ENCODE measurements at regions of chr6 and their contacts with region 1.

Region 1: DNA sequence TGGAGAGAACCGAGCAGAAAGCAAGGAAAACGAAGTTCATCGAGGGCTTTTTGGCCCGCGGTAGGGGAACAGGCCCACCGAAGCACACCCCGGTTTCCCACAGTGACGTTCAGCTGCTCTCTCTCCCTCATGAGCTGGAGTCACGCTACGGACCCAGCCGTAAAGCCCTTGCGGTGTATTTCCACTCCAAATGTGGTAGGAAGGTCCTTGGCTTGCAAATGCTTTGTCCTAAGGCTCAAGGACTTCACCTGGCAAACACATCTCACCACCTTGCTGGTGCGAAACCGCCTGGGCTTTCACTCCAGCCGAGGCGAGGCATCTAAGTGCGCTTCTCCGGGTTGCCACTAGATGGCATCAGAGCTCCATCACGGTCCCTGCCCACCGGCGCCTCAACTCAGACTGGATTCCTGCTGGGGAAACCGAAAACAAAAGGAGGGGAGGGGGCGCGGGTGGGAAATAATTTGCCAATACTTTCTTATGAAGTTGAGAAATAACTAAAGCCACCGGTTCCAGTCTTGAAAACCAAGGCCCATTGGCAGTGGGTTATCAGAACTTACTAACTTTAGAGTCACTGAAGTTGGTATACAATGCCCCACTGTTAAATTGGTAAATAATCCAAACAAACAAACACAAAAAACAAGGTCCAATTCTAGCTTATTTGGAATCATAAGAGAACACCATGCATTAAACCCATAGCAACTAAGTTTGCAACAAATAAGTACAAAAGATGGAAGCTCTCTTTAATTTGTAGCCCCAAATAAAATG is 13.4 kb upstream of the FOXC1 start:
- DNase-seq: no peak
- ATAC-seq: peak; percentile 96
- H3K4me3 ChIP-seq: no peak overlapping the region
- H3K27ac ChIP-seq: no peak overlapping the region
- H3K4me1 ChIP-seq: no peaks in the 10 kb centered on the region
- H3K27me3 ChIP-seq: no peaks in the 10 kb centered on the region; a peak in 2 of 4 replicates
- CTCF ChIP-seq: peak; percentile 92 to 93 (median 93)
- EP300 ChIP-seq: no peak
- POLR2A ChIP-seq: no peak
- RAD21 ChIP-seq: peak; percentile 90

Region 2: GRCh38 chr6:1609648-1610496 is 13.6 kb after region 1 on chr6 and contains the start of gene FOXC1:
- CTCF ChIA-PET with region 1: interaction called, 19 read pairs
- POLR2A ChIA-PET with region 1: no interaction called
- RAD21 ChIA-PET with region 1: interaction called, 5 read pairs
- SMC1A ChIA-PET with region 1: interaction called, 10 read pairs
- in situ Hi-C with region 1: no loop called
- intact Hi-C with region 1: no loop called
- DNase-seq: no peak
- ATAC-seq: peak; percentile 83
- H3K4me3 ChIP-seq: peak within 1 kb of the TSS; percentile 72
- H3K27ac ChIP-seq: no peak within 1 kb of the TSS
- H3K4me1 ChIP-seq: peaks cover 10% of the 10 kb centered on the region
- H3K27me3 ChIP-seq: peaks cover 27 to 36% of the 10 kb centered on the region in 2 experiments
- CTCF ChIP-seq: no peak
- EP300 ChIP-seq: no peak
- POLR2A ChIP-seq: peak; percentile 28; the same call in 1 of the 2 replicates
- RAD21 ChIP-seq: no peak
- polyA plus RNA-seq, gene FOXC1: 0.13 to 0.26 TPM

Region 3: GRCh38 chr6:2196079-2196679 is 599.9 kb after region 1 on chr6:
- CTCF ChIA-PET with region 1: interaction called, 18 read pairs
- POLR2A ChIA-PET with region 1: no interaction called
- RAD21 ChIA-PET with region 1: interaction called, 5 read pairs
- SMC1A ChIA-PET with region 1: interaction called, 6 read pairs
- in situ Hi-C with region 1: no loop called
- intact Hi-C with region 1: loop called (anchors 2 kb)
- DNase-seq: peak; percentile 13
- ATAC-seq: peak; percentile 87
- H3K4me3 ChIP-seq: no peak overlapping the region
- H3K27ac ChIP-seq: no peak overlapping the region
- H3K4me1 ChIP-seq: no peaks in the 10 kb centered on the region
- H3K27me3 ChIP-seq: no peaks in the 10 kb centered on the region
- CTCF ChIP-seq: peak; percentile 67 to 79 (median 77)
- EP300 ChIP-seq: no peak
- POLR2A ChIP-seq: no peak
- RAD21 ChIP-seq: peak; percentile 88

Region 4: GRCh38 chr6:2353412-2354137 is 757.3 kb after region 1 on chr6:
- CTCF ChIA-PET with region 1: interaction called, 28 read pairs
- POLR2A ChIA-PET with region 1: no interaction called
- RAD21 ChIA-PET with region 1: interaction called, 8 read pairs
- SMC1A ChIA-PET with region 1: interaction called, 18 read pairs
- in situ Hi-C with region 1: loop called (anchors 5 kb)
- intact Hi-C with region 1: loop called (anchors 2 kb)
- DNase-seq: peak; percentile 8
- ATAC-seq: peak; percentile 73
- H3K4me3 ChIP-seq: no peak overlapping the region
- H3K27ac ChIP-seq: no peak overlapping the region
- H3K4me1 ChIP-seq: no peaks in the 10 kb centered on the region
- H3K27me3 ChIP-seq: no peaks in the 10 kb centered on the region
- CTCF ChIP-seq: peak; percentile 70 to 83 (median 78); a peak in 5 of 6 replicates
- EP300 ChIP-seq: no peak
- POLR2A ChIP-seq: no peak
- RAD21 ChIP-seq: peak; percentile 89

Region 5: GRCh38 chr6:2634139-2634964 is 1038.1 kb after region 1 on chr6:
- CTCF ChIA-PET with region 1: interaction called, 33 read pairs
- POLR2A ChIA-PET with region 1: no interaction called
- RAD21 ChIA-PET with region 1: interaction called, 10 read pairs
- SMC1A ChIA-PET with region 1: interaction called, 12 read pairs
- in situ Hi-C with region 1: no loop called
- intact Hi-C with region 1: loop called (anchors 1 kb)
- DNase-seq: no peak
- ATAC-seq: peak; percentile 99
- H3K4me3 ChIP-seq: 0 out of 2 replicates have a peak overlapping the region, but pooled peaks have one; percentile 44
- H3K27ac ChIP-seq: no peak overlapping the region
- H3K4me1 ChIP-seq: no peaks in the 10 kb centered on the region
- H3K27me3 ChIP-seq: peaks cover 0 to 1% of the 10 kb centered on the region in 2 experiments; a peak in 2 of 4 replicates
- CTCF ChIP-seq: peak; percentile 88 to 94 (median 90)
- EP300 ChIP-seq: no peak
- POLR2A ChIP-seq: no peak
- RAD21 ChIP-seq: peak; percentile 76

Measured in GM12878 (cell line).